ENCODE measurements at regions of chr3 and their contacts with region 1.

Region 1: DNA sequence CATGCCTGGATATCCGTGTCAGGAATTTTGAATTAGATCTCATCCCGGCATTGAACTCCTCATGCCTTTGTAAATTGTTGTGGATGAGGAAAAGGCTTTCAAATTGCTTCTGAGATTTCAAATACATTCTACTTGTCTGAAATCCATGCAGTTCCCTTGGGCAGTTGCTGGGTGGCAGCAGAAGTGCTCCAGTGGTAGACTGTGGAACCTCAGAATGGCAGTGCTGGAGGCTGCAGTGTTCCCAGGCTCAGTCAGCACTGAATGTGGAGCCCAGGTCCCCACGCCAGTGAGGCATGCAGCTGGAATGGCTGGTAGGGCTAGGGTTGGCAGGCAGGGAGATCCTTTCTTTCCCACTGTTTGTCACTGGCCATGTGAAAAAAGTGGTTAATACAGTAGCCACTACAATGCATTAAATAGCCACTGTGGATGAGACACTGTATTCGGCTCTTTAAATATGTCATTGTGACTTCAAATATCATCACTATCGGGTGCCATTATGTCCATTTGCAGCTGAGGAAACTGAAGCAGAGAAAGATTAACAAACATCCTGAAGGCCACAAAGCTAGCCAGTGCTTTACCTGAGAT is 98.6 kb downstream of the TPRG1 start:
- DNase-seq: peak; percentile 48
- H3K4me3 ChIP-seq: no peak overlapping the region
- H3K27ac ChIP-seq: no peak overlapping the region
- H3K27me3 ChIP-seq: no peaks in the 10 kb centered on the region
- CTCF ChIP-seq: peak; percentile 80

Region 2: DNA sequence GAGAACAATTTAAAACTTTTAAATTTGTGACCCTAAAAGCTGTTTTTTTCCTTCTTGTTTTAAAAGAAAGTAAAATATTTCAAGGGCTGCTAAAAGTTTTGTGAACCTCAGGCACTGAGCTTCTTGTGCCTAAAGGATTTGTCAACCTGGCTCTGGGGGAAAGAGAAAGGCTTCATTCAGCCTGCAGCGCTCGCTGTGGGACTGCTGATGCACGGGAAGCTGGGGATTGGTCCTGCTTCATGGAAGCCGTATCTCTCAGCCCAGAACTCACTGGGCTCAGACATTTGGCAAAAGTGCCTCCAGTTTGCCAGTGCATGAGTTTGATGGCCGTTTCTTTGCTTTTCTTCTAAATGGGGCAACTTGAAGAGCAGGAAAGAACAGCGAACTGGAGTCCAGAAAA is 67.8 kb before region 1 on chr3:
- CTCF ChIA-PET with region 1: interaction called, 10 read pairs
- POLR2A ChIA-PET with region 1: no interaction called
- DNase-seq: no peak
- H3K4me3 ChIP-seq: no peak overlapping the region
- H3K27ac ChIP-seq: no peak overlapping the region
- H3K27me3 ChIP-seq: peaks cover 4% of the 10 kb centered on the region
- CTCF ChIP-seq: no peak

Region 3: GRCh38 chr3:189908646-189909045 is 638.3 kb after region 1 on chr3:
- CTCF ChIA-PET with region 1: interaction called, 13 read pairs
- POLR2A ChIA-PET with region 1: no interaction called
- DNase-seq: peak; percentile 13
- H3K4me3 ChIP-seq: no peak overlapping the region
- H3K27ac ChIP-seq: no peak overlapping the region
- H3K27me3 ChIP-seq: no peaks in the 10 kb centered on the region
- CTCF ChIP-seq: no peak

Region 4: DNA sequence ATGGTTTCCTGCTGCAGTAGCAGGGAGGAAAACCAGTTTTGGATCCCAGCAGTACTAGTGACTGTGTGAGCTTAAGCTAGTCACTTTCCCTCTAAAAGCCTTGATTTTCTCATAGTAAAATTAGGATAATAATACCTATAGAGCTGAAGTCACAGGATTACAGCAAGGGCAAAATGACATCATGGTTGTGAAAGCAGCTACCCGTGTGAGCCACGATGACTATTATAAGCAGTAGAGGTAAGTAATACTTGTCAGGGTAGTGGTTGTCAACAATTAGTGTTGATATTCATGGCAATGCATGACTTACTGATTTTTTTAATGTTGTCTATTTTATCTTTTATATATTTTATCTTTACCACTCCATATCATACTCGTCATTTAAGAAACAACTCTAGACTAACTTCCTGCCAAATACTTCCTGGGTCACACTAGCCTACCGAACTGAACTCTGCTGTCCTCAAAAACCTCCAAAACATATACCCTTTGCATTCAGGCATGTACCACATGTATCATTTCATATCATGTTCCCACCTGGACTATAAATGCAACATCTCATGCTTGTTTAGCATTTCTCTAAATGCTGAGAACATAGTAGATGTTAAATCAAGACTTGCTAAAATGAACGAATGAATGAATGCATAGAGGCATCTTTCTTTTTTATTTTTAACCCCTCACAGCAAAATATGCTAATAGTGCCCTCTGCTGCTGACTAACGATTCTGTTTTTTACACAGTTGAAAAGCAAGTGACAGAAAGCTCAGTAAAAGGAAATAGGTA is 677.8 kb after region 1 on chr3:
- CTCF ChIA-PET with region 1: interaction called, 126 read pairs
- POLR2A ChIA-PET with region 1: no interaction called
- DNase-seq: no peak
- H3K4me3 ChIP-seq: no peak overlapping the region
- H3K27ac ChIP-seq: no peak overlapping the region
- H3K27me3 ChIP-seq: peaks cover 3% of the 10 kb centered on the region
- CTCF ChIP-seq: peak; percentile 66